ENCODE measurements at regions of chr11 and their contacts with region 1.

Region 1: GRCh38 chr11:12159351-12160099 is 49.1 kb downstream of the MICAL2 start:
- DNase-seq: peak in 6 of 10 donors; percentile 41 to 76 (median 59)
- H3K4me3 ChIP-seq: peak overlapping the region in 17 of 59 donors; percentile 0 to 33 (median 12)
- H3K27ac ChIP-seq: peak overlapping the region in 58 of 59 donors; percentile 59 to 94 (median 84)
- H3K27me3 ChIP-seq: no peaks in the 10 kb centered on the region
- CTCF ChIP-seq: peak in 23 of 56 donors; percentile 3 to 49 (median 24)

Region 2: GRCh38 chr11:12100841-12101242 is 58.7 kb before region 1 on chr11:
- intact Hi-C with region 1: loop called in 1 of 2 experiments (anchors 5 kb)
- DNase-seq: peak in 9 of 10 donors; percentile 74 to 93 (median 79)
- H3K4me3 ChIP-seq: peak overlapping the region in 1 of 59 donors; percentile 25
- H3K27ac ChIP-seq: peak overlapping the region in 3 of 59 donors; percentile 42 to 52 (median 51)
- H3K27me3 ChIP-seq: peaks cover 0 to 4% (median 0%) of the 10 kb centered on the region in 45 donors
- CTCF ChIP-seq: peak in 14 of 56 donors; percentile 12 to 41 (median 24)

Region 3: DNA sequence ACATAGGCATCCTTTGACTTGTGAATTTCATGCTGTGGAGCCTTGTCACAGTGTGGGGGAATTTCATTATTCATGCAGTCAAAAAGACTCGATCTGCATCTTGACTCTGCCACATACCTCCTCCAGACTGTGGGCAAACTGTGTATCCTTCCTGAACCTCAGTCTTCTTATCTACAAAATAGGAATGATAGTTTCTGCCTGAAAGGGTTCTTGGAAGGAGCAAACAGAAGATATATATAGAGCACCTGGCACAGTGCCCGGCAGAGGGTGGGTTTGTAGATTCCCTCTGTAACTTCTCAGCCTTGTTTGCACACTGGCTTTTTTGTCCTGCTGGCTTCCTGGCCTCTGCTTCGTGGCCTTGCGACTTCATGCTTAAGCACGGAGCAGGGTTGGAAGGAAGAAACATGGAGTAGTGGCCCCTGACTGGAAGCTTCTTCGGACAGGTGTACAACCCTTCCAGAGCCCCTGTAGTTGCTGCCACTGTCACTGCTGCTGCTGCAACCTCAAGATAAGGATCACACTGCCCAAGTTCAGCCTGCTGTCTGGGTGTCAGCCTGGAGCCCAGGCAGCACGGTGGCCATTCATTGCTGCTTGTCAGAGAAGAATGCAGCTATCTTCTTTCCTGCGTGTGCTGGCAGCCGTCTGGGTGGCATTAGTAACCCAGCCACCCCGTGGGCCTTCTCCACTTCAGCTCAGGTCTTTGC is 57.3 kb after region 1 on chr11:
- intact Hi-C with region 1: loop called (anchors 5 kb)
- DNase-seq: no peak
- H3K4me3 ChIP-seq: no peak overlapping the region
- H3K27ac ChIP-seq: peak overlapping the region in 44 of 59 donors; percentile 3 to 91 (median 46)
- H3K27me3 ChIP-seq: no peaks in the 10 kb centered on the region
- CTCF ChIP-seq: no peak

Region 4: DNA sequence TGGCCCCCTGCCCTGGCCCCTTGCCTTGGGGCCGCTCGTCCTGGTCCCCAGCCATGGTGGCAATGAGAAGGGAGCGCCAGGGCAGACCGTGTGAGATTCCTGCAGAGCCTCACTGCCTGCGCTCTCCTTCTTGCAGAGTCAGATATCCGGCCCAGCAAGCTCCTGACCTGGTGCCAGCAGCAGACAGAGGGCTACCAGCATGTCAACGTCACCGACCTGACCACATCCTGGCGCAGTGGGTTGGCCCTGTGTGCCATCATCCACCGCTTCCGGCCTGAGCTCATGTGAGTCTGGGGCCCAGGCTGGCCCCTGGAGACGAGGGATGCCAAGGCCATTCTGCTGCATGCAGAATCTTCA is 65.0 kb after region 1 on chr11:
- intact Hi-C with region 1: loop called (anchors 5 kb)
- DNase-seq: peak in 3 of 10 donors; percentile 58 to 90 (median 67)
- H3K4me3 ChIP-seq: no peak overlapping the region
- H3K27ac ChIP-seq: peak overlapping the region in 32 of 59 donors; percentile 4 to 91 (median 38)
- H3K27me3 ChIP-seq: no peaks in the 10 kb centered on the region
- CTCF ChIP-seq: no peak